MCF 10A (cell line): ENCODE measurements at regions of chr3 and their contacts with region 1.

Region 1: DNA sequence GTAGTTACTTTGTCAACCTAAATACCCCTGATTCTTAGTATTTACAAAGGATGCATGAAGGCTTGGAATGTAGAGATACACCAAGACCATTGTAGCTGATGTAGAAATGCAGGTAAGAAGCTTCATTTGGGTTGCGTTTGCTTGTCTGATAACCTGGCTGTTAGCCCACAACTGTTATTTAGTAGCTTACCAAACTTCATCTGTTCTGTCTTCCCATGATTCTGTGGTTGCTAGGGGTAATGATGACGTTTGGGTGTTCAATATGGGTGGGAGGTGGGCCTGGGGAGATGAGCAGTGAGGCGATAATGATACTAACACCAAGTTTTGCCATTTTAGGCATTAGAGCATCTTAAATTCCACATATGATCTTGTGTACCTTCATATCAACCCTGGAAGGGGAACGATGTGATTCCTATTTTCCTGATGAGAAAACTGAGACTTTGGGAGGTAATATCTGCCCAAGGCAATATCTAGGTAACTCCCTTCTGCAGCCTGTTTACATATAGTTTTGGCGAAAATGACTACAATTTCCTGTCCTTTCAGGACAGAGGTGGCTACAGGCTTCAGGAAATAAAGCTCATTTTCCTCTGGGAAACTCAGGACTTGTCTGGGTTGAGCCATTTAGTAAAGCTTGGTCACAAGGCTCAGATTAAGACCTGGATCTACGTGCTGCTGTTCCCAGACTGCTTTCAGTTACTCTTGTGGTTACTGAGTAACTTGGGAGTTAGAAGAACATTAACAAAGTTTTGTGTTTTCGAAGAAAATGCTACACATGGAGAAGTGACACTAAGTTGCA is 26.8 kb downstream of the FNDC3B start:
- DNase-seq: no peak
- H3K4me3 Mint-ChIP-seq: no peak overlapping the region
- H3K27ac Mint-ChIP-seq: peak overlapping the region; percentile 3
- H3K4me1 Mint-ChIP-seq: peaks cover 30% of the 10 kb centered on the region
- H3K27me3 Mint-ChIP-seq: no peaks in the 10 kb centered on the region
- CTCF ChIP-seq: no peak

Region 2: GRCh38 chr3:172082269-172082668 is 16.1 kb after region 1 on chr3:
- CTCF ChIA-PET with region 1: interaction called, 3 read pairs
- POLR2A ChIA-PET with region 1: interaction called, 10 read pairs
- intact Hi-C with region 1: no loop called
- DNase-seq: no peak
- H3K4me3 Mint-ChIP-seq: no peak overlapping the region
- H3K27ac Mint-ChIP-seq: no peak overlapping the region
- H3K4me1 Mint-ChIP-seq: peaks cover 29% of the 10 kb centered on the region
- H3K27me3 Mint-ChIP-seq: no peaks in the 10 kb centered on the region
- CTCF ChIP-seq: no peak